ENCODE measurements at regions of chr20 and their contacts with region 1.

Region 1: DNA sequence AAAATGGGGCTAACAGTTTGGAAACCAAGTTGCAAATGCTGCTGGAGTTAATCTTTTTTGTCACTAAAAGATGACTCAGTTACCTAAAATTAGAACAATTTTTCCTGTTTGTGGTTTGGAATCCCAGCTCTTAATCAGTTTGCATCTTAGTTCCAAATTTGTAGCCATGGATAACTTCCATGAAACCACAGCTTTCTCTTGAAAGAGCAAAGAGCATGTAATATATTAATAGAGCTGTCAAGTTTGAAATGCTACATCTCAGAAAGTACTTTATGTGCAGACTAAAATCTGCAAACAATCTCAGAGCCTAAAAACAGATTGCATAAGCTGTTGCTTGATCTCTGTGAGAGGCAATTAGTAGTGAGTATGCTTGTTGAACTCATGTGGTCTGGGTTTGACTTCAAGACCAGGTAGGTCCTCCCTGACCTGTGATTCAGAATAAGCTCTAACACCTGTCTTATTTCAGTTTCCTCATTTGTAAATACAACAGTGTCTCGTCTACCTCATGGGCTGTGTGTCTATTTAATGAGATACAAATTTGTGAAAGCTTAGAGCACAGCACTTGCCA is 23.5 kb downstream of the DHX35 start:
- DNase-seq: no peak
- ATAC-seq: no peak
- H3K4me3 Mint-ChIP-seq: no peak overlapping the region
- H3K27ac Mint-ChIP-seq: no peak overlapping the region
- H3K4me1 Mint-ChIP-seq: peaks cover 23% of the 10 kb centered on the region
- H3K27me3 Mint-ChIP-seq: no peaks in the 10 kb centered on the region

Region 2: DNA sequence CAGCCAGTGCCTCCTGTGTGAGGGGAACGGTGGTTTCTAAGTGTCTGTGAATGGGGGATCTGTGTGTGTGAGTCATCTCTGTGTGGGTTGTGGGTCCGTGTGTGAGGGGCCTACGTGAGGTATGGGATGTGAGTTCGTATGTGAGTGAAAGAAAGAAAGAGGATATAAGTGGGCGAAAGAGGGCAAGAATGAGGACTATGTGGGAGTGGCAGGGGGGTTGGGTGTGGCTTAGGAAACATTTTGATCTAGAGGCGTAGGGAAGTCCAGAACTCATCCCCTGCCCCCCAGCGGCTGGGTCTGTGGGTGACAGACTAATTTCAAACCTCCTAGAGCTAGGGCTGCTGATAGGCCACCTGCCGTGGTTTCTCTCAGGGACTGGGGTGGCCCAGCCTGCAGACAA is 11.9 kb after region 1 on chr20:
- CTCF ChIA-PET with region 1: interaction called, 22 read pairs
- POLR2A ChIA-PET with region 1: interaction called, 3 read pairs
- DNase-seq: peak; percentile 75
- ATAC-seq: peak; percentile 87
- H3K4me3 Mint-ChIP-seq: peak overlapping the region; percentile 28
- H3K27ac Mint-ChIP-seq: peak overlapping the region; percentile 67
- H3K4me1 Mint-ChIP-seq: peaks cover 26% of the 10 kb centered on the region
- H3K27me3 Mint-ChIP-seq: no peaks in the 10 kb centered on the region

Region 3: DNA sequence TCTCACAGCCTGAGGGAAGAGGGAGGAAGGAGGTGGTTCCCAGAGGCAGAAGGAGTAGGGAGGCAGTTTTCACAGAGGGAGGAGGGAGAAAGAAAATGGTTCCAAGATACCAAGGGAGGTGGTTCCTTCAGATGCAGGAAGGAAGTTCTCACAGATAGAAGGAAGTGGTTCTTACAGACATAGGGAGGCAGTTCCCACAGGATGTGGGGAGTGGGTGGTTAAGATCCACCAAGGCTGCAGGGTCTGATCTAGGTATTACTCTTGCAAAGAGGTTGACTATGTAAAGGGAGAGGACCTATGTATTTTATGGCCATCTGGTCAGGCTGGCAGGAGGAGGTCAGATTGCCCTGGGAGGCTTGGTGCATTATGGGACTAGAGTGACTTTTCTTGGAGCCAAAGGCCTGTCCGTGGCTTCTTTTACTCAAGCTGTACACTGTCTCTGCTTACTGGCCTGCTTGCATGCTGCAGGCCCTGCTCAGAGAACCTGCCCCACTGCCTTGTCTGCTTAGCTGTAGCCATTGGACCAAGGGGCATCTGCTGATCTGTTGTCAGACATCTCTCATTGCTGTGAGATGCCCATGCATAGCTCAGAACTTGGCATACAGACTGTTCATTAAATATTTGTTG is 260.1 kb after region 1 on chr20:
- CTCF ChIA-PET with region 1: no interaction called
- POLR2A ChIA-PET with region 1: no interaction called
- DNase-seq: peak; percentile 65
- ATAC-seq: peak; percentile 63
- H3K4me3 Mint-ChIP-seq: peak overlapping the region; percentile 17
- H3K27ac Mint-ChIP-seq: peak overlapping the region; percentile 58
- H3K4me1 Mint-ChIP-seq: peaks cover 41% of the 10 kb centered on the region
- H3K27me3 Mint-ChIP-seq: peaks cover 15% of the 10 kb centered on the region